ENCODE measurements at regions of chr22 and their contacts with region 1.

Region 1: GRCh38 chr22:37623075-37624016 is 14.7 kb downstream of the GGA1 start:
- DNase-seq: peak; percentile 69 to 87 (median 73)
- ATAC-seq: peak; percentile 73
- H3K4me3 ChIP-seq: no peak overlapping the region
- H3K4me3 Mint-ChIP-seq: peak overlapping the region; percentile 76
- H3K27ac ChIP-seq: peak overlapping the region in 1 of 2 donors; percentile 26
- H3K27ac Mint-ChIP-seq: peak overlapping the region; percentile 90
- H3K4me1 ChIP-seq: peaks cover 55% of the 10 kb centered on the region
- H3K4me1 Mint-ChIP-seq: peaks cover 38% of the 10 kb centered on the region
- H3K27me3 ChIP-seq: no peaks in the 10 kb centered on the region
- H3K27me3 Mint-ChIP-seq: no peaks in the 10 kb centered on the region
- CTCF ChIP-seq: peak; percentile 87

Region 2: GRCh38 chr22:36734171-36735058 is 888.9 kb before region 1 on chr22:
- CTCF ChIA-PET with region 1: no interaction called
- POLR2A ChIA-PET with region 1: no interaction called
- intact Hi-C with region 1: no loop called
- DNase-seq: peak in 1 of 14 experiments; percentile 35
- ATAC-seq: no peak
- H3K4me3 ChIP-seq: no peak overlapping the region
- H3K4me3 Mint-ChIP-seq: no peak overlapping the region
- H3K27ac ChIP-seq: no peak overlapping the region
- H3K27ac Mint-ChIP-seq: no peak overlapping the region
- H3K4me1 ChIP-seq: no peaks in the 10 kb centered on the region
- H3K4me1 Mint-ChIP-seq: no peaks in the 10 kb centered on the region
- H3K27me3 ChIP-seq: peaks cover 6 to 21% of the 10 kb centered on the region in 2 experiments
- H3K27me3 Mint-ChIP-seq: peaks cover 54% of the 10 kb centered on the region
- CTCF ChIP-seq: no peak

Region 3: GRCh38 chr22:37633625-37634416 is 10.5 kb after region 1 on chr22:
- CTCF ChIA-PET with region 1: interaction called, 3 read pairs
- POLR2A ChIA-PET with region 1: interaction called, 107 read pairs
- intact Hi-C with region 1: no loop called
- DNase-seq: peak in 11 of 14 experiments; percentile 44 to 81 (median 52)
- ATAC-seq: peak; percentile 61
- H3K4me3 ChIP-seq: peak overlapping the region; percentile 34
- H3K4me3 Mint-ChIP-seq: peak overlapping the region; percentile 88
- H3K27ac ChIP-seq: peak overlapping the region; percentile 65 to 86
- H3K27ac Mint-ChIP-seq: peak overlapping the region; percentile 94
- H3K4me1 ChIP-seq: peaks cover 85% of the 10 kb centered on the region
- H3K4me1 Mint-ChIP-seq: peaks cover 68% of the 10 kb centered on the region
- H3K27me3 ChIP-seq: no peaks in the 10 kb centered on the region
- H3K27me3 Mint-ChIP-seq: no peaks in the 10 kb centered on the region
- CTCF ChIP-seq: no peak

Region 4: GRCh38 chr22:37643225-37643847 is 20.0 kb after region 1 on chr22:
- CTCF ChIA-PET with region 1: interaction called, 49 read pairs
- POLR2A ChIA-PET with region 1: interaction called, 107 read pairs
- intact Hi-C with region 1: loop called in 1 of 2 experiments (anchors 1 kb)
- DNase-seq: peak; percentile 73 to 94 (median 87)
- ATAC-seq: peak; percentile 68
- H3K4me3 ChIP-seq: no peak overlapping the region
- H3K4me3 Mint-ChIP-seq: peak overlapping the region; percentile 85
- H3K27ac ChIP-seq: no peak overlapping the region
- H3K27ac Mint-ChIP-seq: peak overlapping the region; percentile 80
- H3K4me1 ChIP-seq: peaks cover 65% of the 10 kb centered on the region
- H3K4me1 Mint-ChIP-seq: peaks cover 35% of the 10 kb centered on the region
- H3K27me3 ChIP-seq: no peaks in the 10 kb centered on the region
- H3K27me3 Mint-ChIP-seq: no peaks in the 10 kb centered on the region
- CTCF ChIP-seq: peak; percentile 91

Region 5: GRCh38 chr22:37658133-37659065 is 35.1 kb after region 1 on chr22 and contains the start of gene PDXP:
- CTCF ChIA-PET with region 1: interaction called, 3 read pairs
- POLR2A ChIA-PET with region 1: interaction called, 34 read pairs
- intact Hi-C with region 1: no loop called
- DNase-seq: peak; percentile 96 to 99 (median 99)
- ATAC-seq: peak; percentile 94
- H3K4me3 ChIP-seq: peak within 1 kb of the TSS; percentile 65
- H3K4me3 Mint-ChIP-seq: peak within 1 kb of the TSS; percentile 91
- H3K27ac ChIP-seq: peak within 1 kb of the TSS; percentile 48 to 78
- H3K27ac Mint-ChIP-seq: peak within 1 kb of the TSS; percentile 91
- H3K4me1 ChIP-seq: peaks cover 35% of the 10 kb centered on the region
- H3K4me1 Mint-ChIP-seq: peaks cover 44% of the 10 kb centered on the region
- H3K27me3 ChIP-seq: no peaks in the 10 kb centered on the region
- H3K27me3 Mint-ChIP-seq: no peaks in the 10 kb centered on the region
- CTCF ChIP-seq: no peak
- total RNA-seq, gene PDXP: 1.5 TPM

Region 6: DNA sequence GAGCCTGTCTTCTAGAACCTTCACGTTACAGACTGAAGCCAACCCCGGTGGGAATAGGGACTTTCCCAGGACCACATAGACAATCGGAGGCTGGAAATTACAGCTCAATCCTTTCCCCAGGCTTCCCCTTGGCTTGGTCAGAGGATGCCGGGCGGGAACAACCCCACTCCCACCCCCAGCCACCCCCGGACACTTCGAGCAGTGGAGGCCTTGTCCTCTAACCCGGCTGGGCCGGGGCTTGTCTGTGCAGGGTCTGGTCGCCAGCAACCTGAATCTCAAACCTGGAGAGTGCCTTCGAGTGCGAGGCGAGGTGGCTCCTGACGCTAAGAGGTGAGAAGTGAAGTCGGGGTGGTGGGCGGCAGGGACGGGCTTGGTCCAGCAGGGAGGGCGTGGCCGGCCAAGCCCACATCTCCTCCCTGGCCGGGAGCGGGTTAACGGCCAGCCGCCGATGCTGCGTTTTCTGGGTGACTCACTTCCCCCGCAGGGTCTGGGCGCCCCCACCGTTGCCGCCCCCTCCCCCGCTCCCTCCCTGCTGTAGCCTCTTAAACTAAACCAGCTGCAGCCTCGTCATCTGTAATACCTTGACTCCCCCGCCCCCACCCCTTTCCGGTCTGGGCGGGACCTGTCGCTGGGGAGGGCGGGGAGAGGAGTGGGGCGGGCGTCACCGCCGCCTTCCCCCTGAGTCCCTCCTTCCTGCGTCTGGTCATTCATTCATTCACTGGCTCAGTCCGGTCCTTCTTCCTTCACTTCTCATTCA is 53.6 kb after region 1 on chr22:
- CTCF ChIA-PET with region 1: interaction called, 19 read pairs
- POLR2A ChIA-PET with region 1: interaction called, 29 read pairs
- intact Hi-C with region 1: loop called in 1 of 2 experiments (anchors 1 kb)
- DNase-seq: peak; percentile 90 to 97 (median 94)
- ATAC-seq: peak; percentile 83
- H3K4me3 ChIP-seq: peak overlapping the region; percentile 88
- H3K4me3 Mint-ChIP-seq: peak overlapping the region; percentile 89
- H3K27ac ChIP-seq: peak overlapping the region; percentile 91 to 99
- H3K27ac Mint-ChIP-seq: peak overlapping the region; percentile 96
- H3K4me1 ChIP-seq: peaks cover 72% of the 10 kb centered on the region
- H3K4me1 Mint-ChIP-seq: peaks cover 58% of the 10 kb centered on the region
- H3K27me3 ChIP-seq: no peaks in the 10 kb centered on the region
- H3K27me3 Mint-ChIP-seq: no peaks in the 10 kb centered on the region
- CTCF ChIP-seq: no peak

Region 7: GRCh38 chr22:37686002-37686982 is 62.9 kb after region 1 on chr22 and contains the start of gene NOL12:
- CTCF ChIA-PET with region 1: interaction called, 19 read pairs
- POLR2A ChIA-PET with region 1: interaction called, 15 read pairs
- intact Hi-C with region 1: loop called in 1 of 2 experiments (anchors 1 kb)
- DNase-seq: peak; percentile 64 to 90 (median 72)
- ATAC-seq: peak; percentile 92
- H3K4me3 ChIP-seq: peak within 1 kb of the TSS; percentile 72
- H3K4me3 Mint-ChIP-seq: peak within 1 kb of the TSS; percentile 90
- H3K27ac ChIP-seq: peak within 1 kb of the TSS; percentile 75 to 80
- H3K27ac Mint-ChIP-seq: peak within 1 kb of the TSS; percentile 76
- H3K4me1 ChIP-seq: peaks cover 38% of the 10 kb centered on the region
- H3K4me1 Mint-ChIP-seq: peaks cover 27% of the 10 kb centered on the region
- H3K27me3 ChIP-seq: no peaks in the 10 kb centered on the region
- H3K27me3 Mint-ChIP-seq: no peaks in the 10 kb centered on the region
- CTCF ChIP-seq: no peak
- total RNA-seq, gene NOL12: 24.3 to 26.2 TPM

Region 8: GRCh38 chr22:37745548-37746365 is 122.4 kb after region 1 on chr22:
- CTCF ChIA-PET with region 1: no interaction called
- POLR2A ChIA-PET with region 1: no interaction called
- intact Hi-C with region 1: loop called in 1 of 2 experiments (anchors 5 kb)
- DNase-seq: peak; percentile 68 to 92 (median 84)
- ATAC-seq: peak; percentile 95
- H3K4me3 ChIP-seq: peak overlapping the region; percentile 90
- H3K4me3 Mint-ChIP-seq: peak overlapping the region; percentile 96
- H3K27ac ChIP-seq: peak overlapping the region in 1 of 2 donors; percentile 13
- H3K27ac Mint-ChIP-seq: peak overlapping the region; percentile 83
- H3K4me1 ChIP-seq: peaks cover 27% of the 10 kb centered on the region
- H3K4me1 Mint-ChIP-seq: peaks cover 22% of the 10 kb centered on the region
- H3K27me3 ChIP-seq: no peaks in the 10 kb centered on the region
- H3K27me3 Mint-ChIP-seq: no peaks in the 10 kb centered on the region
- CTCF ChIP-seq: no peak